Activated CD8-positive, alpha-beta memory T cell treated with anti-CD3 and anti-CD28 coated beads, Interleukin-2, amount 10 ng/mL, durations not matched to agents 7 days and 5 days (primary cell): ENCODE measurements at regions of chr7 and their contacts with region 1.

Region 1: DNA sequence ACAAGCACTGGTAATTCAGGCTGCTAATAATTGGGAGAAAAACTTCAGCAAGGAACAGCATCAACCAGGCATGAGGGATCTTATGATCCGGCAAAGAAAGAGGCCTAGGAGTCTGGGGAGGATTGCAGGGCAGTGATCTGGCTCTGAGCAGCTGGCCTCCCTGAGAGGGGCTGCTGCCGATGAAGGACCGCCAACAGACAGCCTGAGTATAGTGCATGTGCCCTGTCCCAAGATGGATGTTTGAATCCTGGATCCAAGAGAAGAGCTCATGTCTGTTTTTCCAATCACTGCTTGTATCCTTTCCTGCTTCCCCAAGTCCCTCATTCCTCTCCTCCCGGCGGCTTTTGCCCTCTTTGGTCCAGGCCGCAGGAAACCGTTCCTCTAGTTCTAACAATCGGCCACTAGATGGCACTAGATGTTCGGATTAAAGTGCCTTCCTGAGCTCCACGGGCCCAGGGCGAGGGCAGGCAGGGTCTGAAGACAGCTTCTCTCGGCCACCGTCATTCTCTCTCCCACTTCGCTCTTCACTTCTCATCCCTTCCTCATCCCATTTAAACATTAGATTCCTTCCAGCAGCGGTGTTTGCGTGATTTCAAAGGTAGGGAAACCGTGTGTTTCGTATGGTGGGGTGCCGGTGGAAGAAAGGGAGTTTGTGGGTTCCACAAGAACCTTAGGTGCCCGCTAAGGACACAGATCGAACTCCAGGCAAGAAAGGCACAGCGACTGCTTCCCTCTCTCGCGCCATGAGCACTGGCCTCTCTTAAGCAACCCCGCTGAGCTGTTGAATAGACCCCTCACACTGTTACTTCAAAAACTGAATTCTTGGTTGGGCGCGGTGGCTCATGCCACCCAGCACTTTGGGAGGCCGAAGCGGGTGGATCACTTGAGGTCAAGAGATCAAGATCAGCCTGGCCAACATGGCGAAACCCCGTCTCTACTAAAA is 82.4 kb downstream of the ADCYAP1R1 start:
- DNase-seq: peak; percentile 61
- ATAC-seq: peak; percentile 70
- H3K4me3 Mint-ChIP-seq: no peak overlapping the region
- H3K27ac Mint-ChIP-seq: no peak overlapping the region
- H3K4me1 Mint-ChIP-seq: peaks cover 2% of the 10 kb centered on the region
- H3K27me3 Mint-ChIP-seq: peaks cover 3% of the 10 kb centered on the region

Region 2: GRCh38 chr7:30983042-30983913 is 151.2 kb before region 1 on chr7:
- CTCF ChIA-PET with region 1: interaction called, 19 read pairs
- DNase-seq: peak; percentile 81
- ATAC-seq: peak; percentile 84
- H3K4me3 Mint-ChIP-seq: no peak overlapping the region
- H3K27ac Mint-ChIP-seq: no peak overlapping the region
- H3K4me1 Mint-ChIP-seq: peaks cover 5% of the 10 kb centered on the region
- H3K27me3 Mint-ChIP-seq: peaks cover 15% of the 10 kb centered on the region

Region 3: DNA sequence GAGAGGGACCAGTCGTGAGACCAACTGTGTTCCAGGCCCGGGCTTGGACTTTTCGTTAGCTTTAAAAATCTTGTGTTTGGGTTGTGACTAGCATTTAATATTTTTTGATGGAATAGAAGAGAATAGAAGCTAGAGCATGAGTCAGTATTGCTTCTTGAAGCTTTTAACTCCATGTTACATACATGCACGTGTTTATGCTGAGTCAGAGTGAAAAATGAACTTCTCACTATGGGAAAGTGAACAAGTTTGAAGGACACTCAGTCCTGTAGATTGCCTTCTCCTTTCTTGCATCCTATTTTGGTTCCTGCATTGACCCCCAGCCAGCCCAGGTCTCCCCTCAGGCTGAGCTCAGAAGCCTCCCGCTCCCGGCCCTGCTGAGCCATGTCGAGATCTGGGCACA is 139.0 kb before region 1 on chr7:
- CTCF ChIA-PET with region 1: no interaction called
- DNase-seq: no peak
- ATAC-seq: no peak
- H3K4me3 Mint-ChIP-seq: no peak overlapping the region
- H3K27ac Mint-ChIP-seq: no peak overlapping the region
- H3K4me1 Mint-ChIP-seq: no peaks in the 10 kb centered on the region
- H3K27me3 Mint-ChIP-seq: no peaks in the 10 kb centered on the region

Region 4: DNA sequence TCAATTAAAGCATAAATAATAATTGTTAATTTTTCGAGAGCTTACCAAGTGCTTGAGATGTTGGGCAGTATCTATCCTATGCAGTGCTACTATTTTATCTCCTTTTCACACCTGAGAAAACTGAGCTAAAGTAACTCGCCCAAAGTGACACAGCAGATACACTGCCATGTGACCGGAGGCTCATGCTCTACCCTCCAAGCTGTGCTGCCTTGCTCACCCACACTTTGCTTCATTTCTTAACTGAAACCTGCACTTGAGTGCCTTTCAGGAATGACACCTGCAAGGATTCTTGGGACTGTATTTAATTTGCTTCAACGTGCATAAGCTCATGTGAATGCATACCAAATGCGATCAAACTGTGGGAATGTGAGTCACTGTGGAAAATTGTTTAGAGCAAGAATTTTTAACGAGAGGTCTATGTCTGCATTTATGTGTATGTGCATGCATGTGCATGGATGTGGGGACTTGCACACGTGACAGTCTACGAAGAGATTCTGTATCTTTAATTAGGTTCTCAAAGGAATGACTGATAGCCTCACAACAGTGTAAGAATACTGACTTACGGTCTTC is 36.8 kb after region 1 on chr7:
- CTCF ChIA-PET with region 1: no interaction called
- DNase-seq: no peak
- ATAC-seq: no peak
- H3K4me3 Mint-ChIP-seq: no peak overlapping the region
- H3K27ac Mint-ChIP-seq: no peak overlapping the region
- H3K4me1 Mint-ChIP-seq: no peaks in the 10 kb centered on the region
- H3K27me3 Mint-ChIP-seq: no peaks in the 10 kb centered on the region